Mucosa of descending colon (tissue), 3 donors: ENCODE measurements at regions of chr6 and their contacts with region 1.

Region 1: DNA sequence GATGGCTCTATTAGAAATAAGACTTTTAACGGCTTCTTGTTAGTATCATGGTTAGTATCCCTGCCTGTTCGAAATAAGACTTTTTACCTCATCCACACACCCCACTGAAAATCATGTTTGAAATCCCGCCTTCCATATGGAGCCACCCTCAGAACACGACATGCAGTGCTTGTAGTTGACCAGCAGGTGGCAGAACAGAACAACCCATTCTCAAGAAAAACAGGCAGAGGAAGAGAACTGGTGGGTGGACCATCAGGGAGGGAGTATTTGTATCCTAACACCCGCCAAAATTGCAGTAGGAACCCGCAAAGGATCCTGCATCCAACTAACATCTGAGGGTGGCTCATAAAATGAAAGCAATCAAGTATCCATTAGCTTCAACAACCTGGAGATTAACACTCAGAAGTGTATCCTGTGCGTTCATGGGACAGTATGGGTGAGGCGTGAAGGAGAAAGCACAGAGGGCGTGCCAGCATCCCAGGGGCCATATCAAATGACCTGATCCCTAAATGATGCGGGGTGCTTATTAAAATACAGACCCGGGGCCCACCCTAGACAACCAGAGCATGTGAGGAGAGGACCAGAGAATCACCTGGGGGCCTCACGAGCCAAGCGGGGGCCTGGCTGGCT is 89.6 kb upstream of the NHSL1 start:
- DNase-seq: peak in 1 of 3 donors; percentile 59
- ATAC-seq: peak; percentile 64
- H3K4me3 ChIP-seq: no peak overlapping the region
- H3K4me1 ChIP-seq: peaks cover 13% of the 10 kb centered on the region
- CTCF ChIP-seq: peak; percentile 80

Region 2: DNA sequence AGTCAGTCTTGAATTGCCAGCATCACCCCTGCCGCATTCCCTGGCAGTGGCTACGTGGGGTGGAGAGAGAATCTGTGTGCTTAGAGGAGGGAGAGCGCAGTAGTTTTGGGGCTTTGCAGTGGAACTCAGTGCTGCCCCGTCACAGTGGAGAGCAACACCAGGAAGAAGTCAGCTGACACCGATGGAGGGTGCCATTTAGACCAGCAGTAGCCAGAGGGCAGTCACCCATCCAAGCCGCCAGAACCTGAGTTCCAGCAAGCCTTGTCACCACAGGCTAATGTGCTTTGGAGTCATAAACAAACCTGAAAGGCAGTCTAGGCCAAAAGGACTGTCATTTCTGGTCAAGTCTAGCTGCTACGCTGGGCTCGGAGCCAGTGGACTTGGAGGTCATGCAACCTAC is 459.7 kb before region 1 on chr6:
- intact Hi-C with region 1: loop called in 1 of 2 experiments (anchors 10 kb)
- DNase-seq: no peak
- ATAC-seq: peak; percentile 25
- H3K4me3 ChIP-seq: no peak overlapping the region
- H3K4me1 ChIP-seq: no peaks in the 10 kb centered on the region
- CTCF ChIP-seq: no peak

Region 3: DNA sequence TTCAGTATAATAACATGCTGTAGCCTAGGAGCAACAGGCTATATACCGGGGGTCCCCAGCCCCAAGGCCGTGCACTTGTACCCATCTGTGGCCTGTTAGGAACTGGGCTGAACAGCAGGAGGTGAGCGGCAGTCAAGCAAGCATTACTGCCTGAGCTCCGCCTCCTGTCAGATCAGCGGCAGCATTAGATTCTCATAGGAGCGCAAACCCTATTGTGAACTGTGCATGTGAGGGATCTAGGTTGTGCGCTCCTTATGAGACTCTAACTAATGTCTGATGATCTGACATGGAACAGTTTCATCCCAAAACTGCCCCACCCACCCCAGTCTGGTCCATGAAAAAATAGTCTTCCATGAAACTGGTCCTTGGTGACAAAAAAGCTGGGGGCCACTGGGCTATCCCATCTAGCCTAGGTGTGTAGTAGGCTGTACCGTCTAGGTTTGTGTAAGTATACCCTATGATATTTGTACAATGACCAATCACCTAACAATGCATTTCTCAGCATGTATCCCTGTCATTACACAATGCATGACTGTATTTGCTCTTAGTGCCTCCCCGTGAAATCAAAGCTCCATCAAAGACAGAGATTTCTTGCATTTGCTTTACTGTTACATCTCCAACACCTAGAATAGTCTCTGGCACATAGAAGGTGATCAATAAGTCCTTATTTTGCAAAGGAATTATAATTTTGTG is 120.5 kb before region 1 on chr6:
- intact Hi-C with region 1: no loop called
- DNase-seq: no peak
- ATAC-seq: peak; percentile 24
- H3K4me3 ChIP-seq: no peak overlapping the region
- H3K4me1 ChIP-seq: no peaks in the 10 kb centered on the region
- CTCF ChIP-seq: no peak

Region 4: GRCh38 chr6:138631566-138631965 is 42.6 kb after region 1 on chr6:
- intact Hi-C with region 1: no loop called
- DNase-seq: no peak
- ATAC-seq: no peak
- H3K4me3 ChIP-seq: no peak overlapping the region
- H3K4me1 ChIP-seq: no peaks in the 10 kb centered on the region
- CTCF ChIP-seq: no peak

Region 5: DNA sequence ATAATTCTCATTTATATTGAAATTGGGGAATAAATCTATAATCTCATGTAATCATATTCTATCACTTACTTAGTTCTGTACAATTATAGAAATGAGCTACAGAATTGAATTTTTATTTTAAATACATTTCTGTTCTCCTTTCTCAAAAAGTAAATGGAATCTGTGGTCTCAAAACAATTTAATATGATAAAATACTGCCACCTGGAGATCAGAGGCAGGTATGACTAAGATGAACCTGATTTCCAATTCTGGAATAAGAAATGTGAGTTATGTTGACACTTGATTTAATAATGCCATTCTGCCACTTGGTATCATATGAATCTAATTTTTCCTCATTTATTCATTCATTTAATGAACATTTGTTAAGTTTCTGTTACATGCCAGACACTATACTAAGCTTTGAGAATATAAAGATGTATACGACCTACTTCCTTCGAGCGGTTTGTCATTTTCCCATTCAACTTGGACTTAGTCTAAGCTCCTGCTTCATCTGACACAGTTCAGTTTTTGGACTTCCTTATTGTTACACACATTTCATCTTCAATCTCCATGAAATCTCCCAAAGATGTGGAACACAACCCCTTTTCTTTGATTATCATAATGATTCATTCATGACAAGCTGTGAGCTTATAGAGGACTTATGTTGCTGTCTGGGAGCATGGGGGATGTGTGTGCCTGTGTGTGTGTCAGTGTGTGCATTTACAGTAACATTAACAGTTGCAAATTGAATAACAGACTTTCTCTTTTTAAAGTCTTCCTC is 177.2 kb after region 1 on chr6:
- intact Hi-C with region 1: loop called (anchors 5 to 10 kb)
- DNase-seq: peak in 1 of 3 donors; percentile 9
- ATAC-seq: no peak
- H3K4me3 ChIP-seq: no peak overlapping the region
- H3K4me1 ChIP-seq: no peaks in the 10 kb centered on the region
- CTCF ChIP-seq: peak; percentile 49